ENCODE measurements at regions of chr12 and their contacts with region 1.

Region 1: DNA sequence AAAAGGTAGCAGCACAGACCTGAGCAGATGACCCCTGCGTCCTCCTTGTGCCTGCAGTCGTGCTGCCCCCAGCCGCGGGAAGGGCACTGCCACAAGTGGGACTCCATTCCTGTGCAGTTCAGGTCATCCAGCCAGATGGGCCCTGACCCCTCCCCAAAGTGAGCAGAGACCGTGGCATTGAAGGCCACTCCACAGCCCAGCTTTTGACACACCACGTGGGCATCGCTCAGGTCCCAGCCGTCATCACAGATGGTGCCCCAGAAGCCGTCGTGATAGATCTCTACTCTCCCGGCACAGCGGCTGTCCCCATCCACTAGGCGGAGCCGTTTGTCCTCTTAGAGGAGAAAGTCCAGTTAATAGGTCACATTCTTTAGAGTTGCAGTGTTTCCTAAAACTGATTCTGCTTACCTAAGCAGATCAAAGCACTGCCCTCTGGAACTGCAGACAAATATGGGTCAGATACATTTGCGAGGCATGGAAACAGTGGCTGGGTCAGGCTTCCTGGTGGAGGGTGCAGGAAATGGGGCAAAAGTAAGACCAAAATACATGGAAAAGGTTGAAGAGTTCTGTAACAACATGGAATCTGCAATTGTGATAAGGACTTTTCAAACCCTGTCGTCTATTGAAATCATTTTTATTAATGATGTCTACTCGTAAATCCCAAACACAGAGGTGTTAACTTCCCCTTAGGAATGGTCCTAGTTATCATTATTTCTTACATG is 69.4 kb downstream of the CD163L1 start:
- DNase-seq: peak; percentile 9
- H3K4me3 ChIP-seq: no peak overlapping the region
- H3K27ac ChIP-seq: no peak overlapping the region
- H3K4me1 ChIP-seq: peaks cover 1% of the 10 kb centered on the region
- H3K27me3 ChIP-seq: no peaks in the 10 kb centered on the region
- CTCF ChIP-seq: peak; percentile 28 to 34

Region 2: DNA sequence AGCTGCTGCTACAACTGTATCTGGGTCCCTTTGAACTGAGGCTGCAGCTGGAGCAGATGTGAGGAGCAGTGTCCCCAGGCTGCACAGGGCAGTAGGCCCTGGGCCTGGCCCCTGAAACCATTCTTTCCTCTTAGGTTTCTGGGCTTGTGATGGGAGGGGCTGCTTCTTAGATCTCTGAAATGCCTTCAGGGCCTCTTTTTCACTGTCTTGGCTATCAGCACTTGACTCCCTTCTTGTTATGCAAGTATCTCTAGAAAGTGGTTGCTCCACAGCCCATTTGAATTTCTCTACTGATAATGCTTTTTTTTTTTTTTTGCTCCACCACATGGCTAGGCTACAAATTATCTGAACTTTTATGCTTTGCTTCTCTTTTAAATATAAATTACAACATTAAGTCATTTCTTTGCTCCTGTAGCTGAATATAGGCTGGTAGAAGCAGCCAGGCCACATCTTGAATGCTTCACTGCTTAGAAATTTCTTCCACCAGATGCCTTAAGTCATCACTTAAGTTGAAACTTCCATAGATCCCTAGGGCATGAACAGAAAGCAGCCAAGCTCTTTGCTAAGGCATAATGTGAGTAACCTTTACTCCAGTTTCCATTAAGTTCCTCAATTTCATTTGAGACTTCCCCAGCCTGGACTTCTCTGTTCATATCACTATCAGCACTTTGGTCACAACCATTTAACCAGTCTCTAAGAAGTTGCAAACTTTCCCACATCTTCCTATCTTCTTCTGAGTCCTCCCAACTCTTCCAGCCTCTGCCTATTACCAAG is 29.6 kb before region 1 on chr12:
- CTCF ChIA-PET with region 1: no interaction called
- dilution Hi-C with region 1: loop called (anchors 5 kb)
- in situ Hi-C with region 1: no loop called
- intact Hi-C with region 1: no loop called
- DNase-seq: no peak
- H3K4me3 ChIP-seq: no peak overlapping the region
- H3K27ac ChIP-seq: no peak overlapping the region
- H3K4me1 ChIP-seq: no peaks in the 10 kb centered on the region
- H3K27me3 ChIP-seq: no peaks in the 10 kb centered on the region
- CTCF ChIP-seq: no peak

Region 3: DNA sequence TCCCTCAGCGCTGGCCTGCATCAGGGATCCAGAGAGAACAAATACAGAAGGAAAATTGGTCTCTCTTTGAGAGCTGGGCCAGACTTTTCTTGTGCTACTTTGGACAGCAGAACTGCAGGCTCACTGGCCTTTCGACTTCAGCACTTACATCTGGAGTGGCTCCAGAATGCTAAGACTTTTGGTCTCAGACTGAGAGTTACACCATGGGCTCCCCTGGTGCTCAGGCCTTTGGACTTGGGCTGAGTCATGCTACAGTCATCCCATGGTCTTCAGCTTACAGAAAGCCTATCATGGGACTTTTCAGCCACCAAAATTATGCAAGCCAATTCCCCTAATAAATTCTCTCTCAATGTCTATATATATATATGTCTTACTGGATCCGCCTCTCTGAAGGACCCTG is 138.0 kb after region 1 on chr12:
- CTCF ChIA-PET with region 1: no interaction called
- dilution Hi-C with region 1: no loop called
- in situ Hi-C with region 1: no loop called
- intact Hi-C with region 1: no loop called
- DNase-seq: peak; percentile 64
- H3K4me3 ChIP-seq: no peak overlapping the region
- H3K27ac ChIP-seq: no peak overlapping the region
- H3K4me1 ChIP-seq: no peaks in the 10 kb centered on the region
- H3K27me3 ChIP-seq: no peaks in the 10 kb centered on the region
- CTCF ChIP-seq: no peak